CD4-positive, alpha-beta T cell (primary cell): ENCODE measurements at regions of chr2 and their contacts with region 1.

Region 1: GRCh38 chr2:127479219-127479825 is 47.0 kb downstream of the IWS1 start:
- DNase-seq: peak in 3 of 14 experiments; percentile 48 to 67 (median 66)
- ATAC-seq: peak; percentile 65
- H3K4me3 ChIP-seq: no peak overlapping the region
- H3K4me3 Mint-ChIP-seq: no peak overlapping the region
- H3K27ac ChIP-seq: no peak overlapping the region
- H3K27ac Mint-ChIP-seq: no peak overlapping the region
- H3K4me1 ChIP-seq: no peaks in the 10 kb centered on the region
- H3K4me1 Mint-ChIP-seq: no peaks in the 10 kb centered on the region
- H3K27me3 ChIP-seq: no peaks in the 10 kb centered on the region
- H3K27me3 Mint-ChIP-seq: no peaks in the 10 kb centered on the region
- CTCF ChIP-seq: peak; percentile 86

Region 2: DNA sequence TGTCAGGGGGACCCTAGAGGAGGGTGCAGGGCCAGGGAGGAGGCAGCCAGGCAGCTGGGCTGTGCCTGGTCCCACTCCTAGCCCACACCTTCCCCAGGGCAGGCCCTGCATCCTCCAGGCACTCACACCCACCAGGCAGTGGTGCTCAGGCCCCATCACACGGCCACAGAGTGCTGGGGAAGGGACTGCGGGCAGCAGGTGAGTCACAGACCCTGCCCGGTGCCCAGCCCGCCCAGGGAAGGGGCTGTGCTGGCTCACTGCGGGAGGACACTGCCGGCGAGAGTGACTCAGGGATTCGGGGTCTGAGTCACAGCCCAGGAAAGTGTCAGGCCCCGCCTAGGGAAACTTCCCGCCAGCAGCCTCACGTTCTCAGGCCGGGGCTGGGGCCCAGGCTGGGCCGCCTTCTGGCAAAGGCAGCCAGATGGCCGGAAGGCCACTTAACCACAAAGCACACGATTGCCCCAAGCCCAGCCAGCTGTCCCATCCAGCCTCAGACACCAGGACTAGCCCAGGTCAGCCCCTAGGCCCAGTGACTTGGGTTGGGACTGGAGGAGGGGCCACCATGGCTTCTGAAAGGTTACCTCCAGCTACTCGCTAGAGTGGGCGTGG is 414.6 kb before region 1 on chr2:
- CTCF ChIA-PET with region 1: no interaction called
- POLR2A ChIA-PET with region 1: no interaction called
- intact Hi-C with region 1: loop called in 1 of 2 experiments (anchors 2 kb)
- DNase-seq: peak in 10 of 14 experiments; percentile 18 to 84 (median 42)
- ATAC-seq: peak; percentile 50
- H3K4me3 ChIP-seq: no peak overlapping the region
- H3K4me3 Mint-ChIP-seq: no peak overlapping the region
- H3K27ac ChIP-seq: peak overlapping the region; percentile 31 to 58
- H3K27ac Mint-ChIP-seq: peak overlapping the region; percentile 24
- H3K4me1 ChIP-seq: peaks cover 46% of the 10 kb centered on the region
- H3K4me1 Mint-ChIP-seq: peaks cover 15% of the 10 kb centered on the region
- H3K27me3 ChIP-seq: no peaks in the 10 kb centered on the region
- H3K27me3 Mint-ChIP-seq: no peaks in the 10 kb centered on the region
- CTCF ChIP-seq: no peak

Region 3: GRCh38 chr2:127197475-127198385 is 281.6 kb before region 1 on chr2:
- CTCF ChIA-PET with region 1: interaction called, 8 read pairs
- POLR2A ChIA-PET with region 1: interaction called, 4 read pairs
- intact Hi-C with region 1: loop called (anchors 1 to 2 kb)
- DNase-seq: peak; percentile 12 to 65 (median 38)
- ATAC-seq: peak; percentile 81
- H3K4me3 ChIP-seq: peak overlapping the region; percentile 17
- H3K4me3 Mint-ChIP-seq: peak overlapping the region; percentile 81
- H3K27ac ChIP-seq: no peak overlapping the region
- H3K27ac Mint-ChIP-seq: no peak overlapping the region
- H3K4me1 ChIP-seq: no peaks in the 10 kb centered on the region
- H3K4me1 Mint-ChIP-seq: no peaks in the 10 kb centered on the region
- H3K27me3 ChIP-seq: no peaks in the 10 kb centered on the region
- H3K27me3 Mint-ChIP-seq: no peaks in the 10 kb centered on the region
- CTCF ChIP-seq: no peak

Region 4: DNA sequence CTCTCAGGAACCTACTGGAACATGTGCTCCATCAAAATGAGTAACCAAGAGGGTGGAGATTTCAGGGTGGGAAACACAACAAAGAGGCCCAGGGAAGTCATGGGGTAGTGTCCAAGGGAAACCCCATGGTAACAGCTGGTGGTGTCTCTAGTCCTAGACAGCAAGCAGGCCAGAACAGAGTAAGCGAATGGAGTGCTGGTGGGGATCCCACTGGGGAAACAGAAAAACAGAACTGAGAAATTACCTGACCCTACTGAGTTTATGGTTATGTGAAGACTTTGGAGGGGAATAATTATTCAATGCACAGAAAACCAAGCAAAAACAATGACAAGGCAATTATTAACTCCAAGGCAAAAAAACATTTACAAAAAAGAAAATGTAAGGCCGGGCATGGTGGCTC is 202.3 kb before region 1 on chr2:
- CTCF ChIA-PET with region 1: no interaction called
- POLR2A ChIA-PET with region 1: interaction called, 3 read pairs
- intact Hi-C with region 1: loop called in 1 of 2 experiments (anchors 5 kb)
- DNase-seq: no peak
- ATAC-seq: no peak
- H3K4me3 ChIP-seq: no peak overlapping the region
- H3K4me3 Mint-ChIP-seq: no peak overlapping the region
- H3K27ac ChIP-seq: no peak overlapping the region
- H3K27ac Mint-ChIP-seq: no peak overlapping the region
- H3K4me1 ChIP-seq: no peaks in the 10 kb centered on the region
- H3K4me1 Mint-ChIP-seq: peaks cover 19% of the 10 kb centered on the region
- H3K27me3 ChIP-seq: no peaks in the 10 kb centered on the region
- H3K27me3 Mint-ChIP-seq: no peaks in the 10 kb centered on the region
- CTCF ChIP-seq: no peak

Region 5: GRCh38 chr2:127324635-127325034 is 154.7 kb before region 1 on chr2:
- CTCF ChIA-PET with region 1: interaction called, 8 read pairs
- POLR2A ChIA-PET with region 1: no interaction called
- intact Hi-C with region 1: loop called (anchors 2 kb)
- DNase-seq: peak in 4 of 14 experiments; percentile 9 to 26 (median 20)
- ATAC-seq: no peak
- H3K4me3 ChIP-seq: no peak overlapping the region
- H3K4me3 Mint-ChIP-seq: no peak overlapping the region
- H3K27ac ChIP-seq: no peak overlapping the region
- H3K27ac Mint-ChIP-seq: no peak overlapping the region
- H3K4me1 ChIP-seq: no peaks in the 10 kb centered on the region
- H3K4me1 Mint-ChIP-seq: no peaks in the 10 kb centered on the region
- H3K27me3 ChIP-seq: no peaks in the 10 kb centered on the region
- H3K27me3 Mint-ChIP-seq: no peaks in the 10 kb centered on the region
- CTCF ChIP-seq: peak; percentile 38

Region 6: GRCh38 chr2:127355386-127356008 is 123.8 kb before region 1 on chr2:
- CTCF ChIA-PET with region 1: interaction called, 4 read pairs
- POLR2A ChIA-PET with region 1: no interaction called
- intact Hi-C with region 1: loop called (anchors 2 to 5 kb)
- DNase-seq: peak in 10 of 14 experiments; percentile 6 to 73 (median 22)
- ATAC-seq: peak; percentile 81
- H3K4me3 ChIP-seq: no peak overlapping the region
- H3K4me3 Mint-ChIP-seq: no peak overlapping the region
- H3K27ac ChIP-seq: no peak overlapping the region
- H3K27ac Mint-ChIP-seq: peak overlapping the region; percentile 1
- H3K4me1 ChIP-seq: no peaks in the 10 kb centered on the region
- H3K4me1 Mint-ChIP-seq: peaks cover 82% of the 10 kb centered on the region
- H3K27me3 ChIP-seq: no peaks in the 10 kb centered on the region
- H3K27me3 Mint-ChIP-seq: no peaks in the 10 kb centered on the region
- CTCF ChIP-seq: peak; percentile 79

Region 7: DNA sequence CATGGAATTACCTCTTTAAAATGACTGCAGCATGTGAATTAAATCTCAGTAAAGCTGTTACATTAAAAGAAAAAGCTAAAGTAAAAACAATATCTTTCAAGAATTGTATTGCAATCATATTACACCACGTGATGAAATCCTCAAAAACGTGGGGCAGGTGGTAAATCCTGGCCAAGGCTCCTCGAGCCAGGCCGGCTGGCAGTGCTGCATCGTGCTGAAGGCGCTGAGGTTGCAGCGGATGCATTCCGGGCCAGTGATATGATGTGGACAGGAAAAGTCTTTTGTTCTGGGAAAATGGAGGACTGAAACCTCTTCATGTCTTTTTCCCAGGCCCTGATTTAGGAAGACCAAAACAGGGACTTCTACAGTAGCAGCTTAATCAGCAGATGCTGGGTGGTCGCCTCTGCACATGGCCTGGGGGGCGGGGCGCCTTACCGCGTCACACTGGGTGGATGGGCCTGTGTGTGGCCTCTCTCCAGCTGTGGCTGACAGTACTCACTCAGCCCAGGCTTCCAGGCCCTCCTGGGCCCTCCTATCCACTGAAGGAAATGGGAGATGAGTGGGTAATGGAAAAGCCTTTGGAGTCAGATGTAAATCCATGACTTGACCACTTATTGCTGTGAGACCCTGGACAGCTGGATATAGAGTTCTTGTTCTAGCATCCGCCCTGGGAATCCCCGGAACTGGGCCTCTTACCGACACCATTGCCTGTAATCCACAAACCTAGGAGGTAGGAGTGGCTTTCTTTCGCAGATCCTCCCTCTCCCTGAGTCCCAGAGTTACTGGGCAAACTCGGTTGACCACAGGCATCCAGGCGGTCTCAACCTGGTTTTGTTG is 15.9 kb before region 1 on chr2:
- CTCF ChIA-PET with region 1: interaction called, 3 read pairs
- POLR2A ChIA-PET with region 1: no interaction called
- intact Hi-C with region 1: loop called in 1 of 2 experiments (anchors 1 kb)
- DNase-seq: no peak
- ATAC-seq: no peak
- H3K4me3 ChIP-seq: no peak overlapping the region
- H3K4me3 Mint-ChIP-seq: no peak overlapping the region
- H3K27ac ChIP-seq: no peak overlapping the region
- H3K27ac Mint-ChIP-seq: no peak overlapping the region
- H3K4me1 ChIP-seq: peaks cover 9% of the 10 kb centered on the region
- H3K4me1 Mint-ChIP-seq: peaks cover 18% of the 10 kb centered on the region
- H3K27me3 ChIP-seq: no peaks in the 10 kb centered on the region
- H3K27me3 Mint-ChIP-seq: no peaks in the 10 kb centered on the region
- CTCF ChIP-seq: no peak